Activated CD4-positive, alpha-beta T cell treated with anti-CD3 and anti-CD28 coated beads, Interleukin-2, amount 10 ng/mL, durations not matched to agents 24 days and 14 days (primary cell): ENCODE measurements at regions of chr4 and their contacts with region 1.

Region 1: GRCh38 chr4:183905081-183905592 is at the start of gene STOX2:
- DNase-seq: peak; percentile 67
- H3K4me3 Mint-ChIP-seq: peak within 1 kb of the TSS; percentile 55
- H3K27ac Mint-ChIP-seq: no peak within 1 kb of the TSS
- H3K4me1 Mint-ChIP-seq: no peaks in the 10 kb centered on the region
- H3K27me3 Mint-ChIP-seq: peaks cover 69% of the 10 kb centered on the region
- total RNA-seq, gene STOX2: not detected in 2 replicates

Region 2: GRCh38 chr4:183722731-183723560 is 182.2 kb before region 1 on chr4:
- intact Hi-C with region 1: loop called (anchors 5 kb)
- DNase-seq: peak; percentile 84
- H3K4me3 Mint-ChIP-seq: peak overlapping the region; percentile 80
- H3K27ac Mint-ChIP-seq: peak overlapping the region; percentile 58
- H3K4me1 Mint-ChIP-seq: peaks cover 12% of the 10 kb centered on the region
- H3K27me3 Mint-ChIP-seq: peaks cover 44% of the 10 kb centered on the region

Region 3: GRCh38 chr4:183797445-183798300 is 107.5 kb before region 1 on chr4:
- intact Hi-C with region 1: loop called (anchors 10 kb)
- DNase-seq: peak; percentile 68
- H3K4me3 Mint-ChIP-seq: peak overlapping the region; percentile 41
- H3K27ac Mint-ChIP-seq: no peak overlapping the region
- H3K4me1 Mint-ChIP-seq: peaks cover 7% of the 10 kb centered on the region
- H3K27me3 Mint-ChIP-seq: peaks cover 69% of the 10 kb centered on the region

Region 4: DNA sequence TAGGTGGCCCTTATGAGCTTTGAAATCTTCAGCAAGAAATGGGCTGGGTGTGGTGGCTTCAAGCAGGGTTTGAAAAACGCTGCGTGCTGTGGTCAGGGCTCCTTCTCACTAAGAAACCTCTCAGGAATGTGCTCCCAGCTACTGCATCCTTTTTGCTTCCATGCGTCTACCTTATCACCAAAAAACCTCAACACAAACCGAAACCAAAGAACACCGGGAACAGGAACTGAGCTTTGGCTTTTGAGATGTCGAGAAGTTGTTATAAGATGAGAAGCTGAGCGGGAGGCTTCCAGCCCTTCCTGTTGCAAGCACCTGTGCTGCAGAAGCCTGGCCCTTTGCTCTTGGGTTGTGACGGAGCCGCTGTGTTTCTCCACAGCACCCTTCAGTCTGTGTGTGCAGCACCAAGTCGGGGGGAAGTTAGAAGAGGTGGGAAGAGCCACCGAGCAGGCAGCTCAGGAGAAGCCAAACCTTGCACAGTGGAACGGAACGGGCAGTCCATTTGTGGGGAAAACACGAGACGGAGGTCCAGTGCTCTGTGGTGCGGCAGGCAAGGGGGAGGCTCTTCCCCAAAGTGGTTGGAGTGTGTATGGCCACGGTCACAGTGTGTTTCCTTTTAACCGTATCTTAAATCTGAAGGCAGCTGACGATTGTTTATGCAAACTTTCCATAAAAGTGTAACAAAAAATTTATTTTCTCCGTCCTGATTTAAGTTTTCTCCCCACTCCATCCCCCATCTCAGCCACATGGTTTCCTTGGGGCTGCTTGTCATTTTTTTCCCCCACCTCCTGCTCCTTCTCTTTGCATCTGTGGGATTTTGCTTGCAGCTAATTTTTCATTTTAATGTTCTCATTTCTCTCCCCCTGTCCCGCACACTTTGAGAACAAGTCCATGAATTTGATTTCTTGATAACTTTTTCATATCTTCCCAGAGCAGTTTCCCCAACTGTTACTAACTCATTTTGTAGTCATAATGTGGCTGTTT is 123.5 kb after region 1 on chr4:
- intact Hi-C with region 1: no loop called
- DNase-seq: peak; percentile 74
- H3K4me3 Mint-ChIP-seq: peak overlapping the region; percentile 87
- H3K27ac Mint-ChIP-seq: no peak overlapping the region
- H3K4me1 Mint-ChIP-seq: peaks cover 19% of the 10 kb centered on the region
- H3K27me3 Mint-ChIP-seq: peaks cover 28% of the 10 kb centered on the region

Region 5: GRCh38 chr4:184100297-184100885 is 195.3 kb after region 1 on chr4:
- intact Hi-C with region 1: no loop called
- DNase-seq: peak; percentile 79
- H3K4me3 Mint-ChIP-seq: no peak overlapping the region
- H3K27ac Mint-ChIP-seq: no peak overlapping the region
- H3K4me1 Mint-ChIP-seq: peaks cover 2% of the 10 kb centered on the region
- H3K27me3 Mint-ChIP-seq: peaks cover 12% of the 10 kb centered on the region

Region 6: GRCh38 chr4:184695178-184695896 is 790.2 kb after region 1 on chr4:
- intact Hi-C with region 1: no loop called
- DNase-seq: peak; percentile 22
- H3K4me3 Mint-ChIP-seq: no peak overlapping the region
- H3K27ac Mint-ChIP-seq: no peak overlapping the region
- H3K4me1 Mint-ChIP-seq: peaks cover 1% of the 10 kb centered on the region
- H3K27me3 Mint-ChIP-seq: no peaks in the 10 kb centered on the region

Region 7: DNA sequence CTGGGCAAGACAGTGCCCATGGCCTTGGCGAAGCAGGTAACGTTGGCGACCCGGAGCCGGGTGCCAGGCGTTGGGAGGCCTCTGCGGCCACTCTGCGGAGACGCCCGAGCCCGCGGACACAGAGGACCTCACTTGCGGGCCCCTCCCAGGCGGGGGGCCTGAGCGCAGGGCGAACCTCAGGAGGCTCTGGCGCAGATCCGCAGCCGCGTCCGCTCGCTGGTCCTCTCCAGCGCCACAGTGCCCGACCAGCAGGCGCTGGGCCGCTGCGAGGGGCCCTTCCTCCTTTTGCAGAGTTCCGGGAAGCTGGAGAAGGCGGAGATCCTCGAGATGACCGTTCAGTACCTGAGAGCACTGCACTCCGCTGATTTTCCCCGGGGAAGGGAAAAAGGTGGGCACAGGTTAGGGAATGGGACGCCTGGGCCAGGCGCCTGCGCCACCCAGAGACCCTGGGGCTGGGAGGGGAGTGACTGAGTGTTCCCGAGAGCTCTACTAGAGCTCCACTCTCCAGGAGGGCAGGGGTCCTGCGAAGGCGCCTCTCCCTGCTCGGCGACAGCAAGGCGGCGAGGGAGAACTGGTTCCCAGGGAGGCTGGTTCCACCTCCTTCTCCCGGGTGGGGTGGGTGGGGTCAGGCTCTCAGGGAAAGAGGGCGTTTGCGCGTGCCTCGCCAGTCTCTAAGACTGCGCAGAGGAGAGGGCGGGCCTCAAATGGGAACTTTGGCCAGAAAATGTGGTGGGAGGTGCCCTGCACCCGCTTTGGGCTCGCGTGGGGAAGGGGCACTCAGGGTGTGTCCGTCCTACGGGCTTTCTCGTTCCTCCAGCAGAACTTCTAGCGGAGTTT is 1114.5 kb after region 1 on chr4:
- intact Hi-C with region 1: loop called (anchors 2 kb)
- DNase-seq: no peak
- H3K4me3 Mint-ChIP-seq: no peak overlapping the region
- H3K27ac Mint-ChIP-seq: no peak overlapping the region
- H3K4me1 Mint-ChIP-seq: peaks cover 5% of the 10 kb centered on the region
- H3K27me3 Mint-ChIP-seq: peaks cover 86% of the 10 kb centered on the region